Caco-2 (cell line): ENCODE measurements at regions of chr6 and their contacts with region 1.

Region 1: DNA sequence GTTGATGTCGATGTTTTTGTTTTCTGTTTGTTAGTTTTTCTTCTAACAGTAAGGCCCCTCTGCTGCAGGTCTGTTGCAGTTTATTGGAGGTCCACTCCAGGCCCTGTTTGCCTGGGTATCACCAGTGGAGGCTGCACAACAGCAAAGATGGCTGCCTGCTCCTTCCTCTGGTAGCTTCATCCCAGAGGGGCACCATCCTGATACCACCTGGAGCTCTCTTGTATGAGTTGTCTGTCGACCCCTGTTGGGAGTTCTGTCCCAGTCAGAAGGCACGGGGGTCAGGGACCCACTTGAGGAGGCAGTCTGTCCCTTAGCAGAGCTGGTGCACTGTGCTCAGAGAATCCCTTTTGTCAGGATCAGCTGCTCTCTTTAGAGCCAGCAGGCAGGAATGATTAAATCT is 66.0 kb upstream of the SDHAF4 start:
- DNase-seq: no peak
- H3K4me3 ChIP-seq: no peak overlapping the region
- H3K4me3 Mint-ChIP-seq: no peak overlapping the region
- H3K27ac Mint-ChIP-seq: no peak overlapping the region
- H3K4me1 ChIP-seq: no peaks in the 10 kb centered on the region
- H3K4me1 Mint-ChIP-seq: no peaks in the 10 kb centered on the region
- H3K27me3 ChIP-seq: no peaks in the 10 kb centered on the region
- H3K27me3 Mint-ChIP-seq: no peaks in the 10 kb centered on the region
- CTCF ChIP-seq: no peak

Region 2: DNA sequence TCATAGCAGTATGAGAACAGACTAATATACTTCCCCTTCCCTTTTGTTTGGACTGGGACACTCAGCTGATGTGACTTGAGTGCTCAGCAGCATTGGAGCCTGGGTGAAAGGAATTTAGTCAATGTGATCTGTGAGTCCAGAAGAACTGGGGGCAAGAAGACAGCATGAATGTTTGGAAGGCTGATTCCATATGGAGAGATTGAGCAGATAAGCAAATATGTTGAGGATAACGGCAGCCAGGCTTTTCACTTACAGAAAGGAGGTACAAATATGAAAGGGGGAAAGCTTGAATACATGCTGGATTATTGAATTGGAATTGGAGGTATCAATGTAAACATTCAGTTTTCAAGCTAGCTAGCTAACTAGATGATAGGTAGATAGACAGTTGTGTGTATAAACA is 129.2 kb after region 1 on chr6:
- CTCF ChIA-PET with region 1: no interaction called
- POLR2A ChIA-PET with region 1: interaction called, 11 read pairs
- intact Hi-C with region 1: no loop called
- DNase-seq: no peak
- H3K4me3 ChIP-seq: no peak overlapping the region
- H3K4me3 Mint-ChIP-seq: no peak overlapping the region
- H3K27ac Mint-ChIP-seq: no peak overlapping the region
- H3K4me1 ChIP-seq: no peaks in the 10 kb centered on the region
- H3K4me1 Mint-ChIP-seq: peaks cover 13% of the 10 kb centered on the region
- H3K27me3 ChIP-seq: no peaks in the 10 kb centered on the region
- H3K27me3 Mint-ChIP-seq: no peaks in the 10 kb centered on the region
- CTCF ChIP-seq: no peak